ENCODE measurements at regions of chr17 and their contacts with region 1.

Region 1: DNA sequence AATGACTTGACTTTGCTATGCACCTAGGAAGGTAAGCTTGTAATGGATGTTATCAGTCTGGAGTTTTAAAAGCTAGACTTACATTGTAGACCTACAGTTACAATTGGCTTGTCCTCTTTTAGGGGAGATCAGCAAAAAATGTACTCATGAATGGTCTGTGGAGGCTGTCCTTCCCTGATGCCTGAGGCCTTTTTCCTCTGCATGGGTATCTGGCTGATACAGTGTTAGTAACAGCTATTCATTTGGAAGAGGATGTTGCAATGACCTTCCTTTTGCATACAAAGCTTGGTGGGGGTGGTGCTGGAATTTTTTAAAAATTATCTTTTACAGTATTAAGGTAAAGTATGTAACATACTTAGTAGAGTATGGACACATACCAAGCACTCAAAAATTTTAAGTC is 525.5 kb downstream of the KIF2B start:
- DNase-seq: no peak
- ATAC-seq: no peak
- H3K4me3 ChIP-seq: no peak overlapping the region
- H3K27ac ChIP-seq: no peak overlapping the region
- H3K4me1 ChIP-seq: no peaks in the 10 kb centered on the region
- H3K27me3 ChIP-seq: no peaks in the 10 kb centered on the region

Region 2: DNA sequence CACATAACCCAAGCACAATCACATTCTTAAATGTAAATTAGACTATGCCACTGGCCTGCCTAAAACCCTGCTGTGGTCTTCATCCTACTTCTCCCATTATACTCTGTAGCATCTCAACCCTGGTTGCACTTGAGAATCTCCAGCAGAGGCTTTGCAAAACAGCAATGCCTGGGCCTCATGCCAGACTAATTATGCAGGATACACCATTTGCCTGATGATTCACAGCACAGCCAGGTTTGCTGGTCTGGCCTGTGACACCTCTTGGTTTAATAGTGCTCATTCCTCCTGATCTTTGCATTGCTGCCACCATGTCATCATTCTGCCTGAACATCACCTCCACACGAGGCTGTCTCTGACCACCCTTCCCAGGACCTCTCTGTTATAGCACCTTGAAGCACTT is 60.5 kb after region 1 on chr17:
- intact Hi-C with region 1: loop called in 1 of 2 experiments (anchors 10 kb)
- DNase-seq: no peak
- ATAC-seq: no peak
- H3K4me3 ChIP-seq: no peak overlapping the region
- H3K27ac ChIP-seq: no peak overlapping the region
- H3K4me1 ChIP-seq: no peaks in the 10 kb centered on the region
- H3K27me3 ChIP-seq: no peaks in the 10 kb centered on the region

Measured in aorta (tissue), 5 donors.